H1 (cell line): ENCODE measurements at regions of chr7 and their contacts with region 1.

Region 1: GRCh38 chr7:36895192-36895591 is 170.9 kb upstream of the AOAH start:
- DNase-seq: no peak
- H3K4me3 ChIP-seq: no peak overlapping the region
- H3K27ac ChIP-seq: no peak overlapping the region
- H3K4me1 ChIP-seq: no peaks in the 10 kb centered on the region
- H3K27me3 ChIP-seq: no peaks in the 10 kb centered on the region
- CTCF ChIP-seq: no peak
- EP300 ChIP-seq: no peak
- POLR2A ChIP-seq: no peak
- RAD21 ChIP-seq: no peak

Region 2: GRCh38 chr7:36881233-36881874 is 13.8 kb before region 1 on chr7:
- CTCF ChIA-PET with region 1: interaction called, 14 read pairs
- POLR2A ChIA-PET with region 1: interaction called, 3 read pairs
- DNase-seq: no peak
- H3K4me3 ChIP-seq: no peak overlapping the region
- H3K27ac ChIP-seq: no peak overlapping the region
- H3K4me1 ChIP-seq: peaks cover 0 to 4% (median 1%) of the 10 kb centered on the region in 4 experiments; a peak in 2 of 7 replicates
- H3K27me3 ChIP-seq: no peaks in the 10 kb centered on the region
- CTCF ChIP-seq: no peak
- EP300 ChIP-seq: no peak
- POLR2A ChIP-seq: no peak
- RAD21 ChIP-seq: no peak

Region 3: DNA sequence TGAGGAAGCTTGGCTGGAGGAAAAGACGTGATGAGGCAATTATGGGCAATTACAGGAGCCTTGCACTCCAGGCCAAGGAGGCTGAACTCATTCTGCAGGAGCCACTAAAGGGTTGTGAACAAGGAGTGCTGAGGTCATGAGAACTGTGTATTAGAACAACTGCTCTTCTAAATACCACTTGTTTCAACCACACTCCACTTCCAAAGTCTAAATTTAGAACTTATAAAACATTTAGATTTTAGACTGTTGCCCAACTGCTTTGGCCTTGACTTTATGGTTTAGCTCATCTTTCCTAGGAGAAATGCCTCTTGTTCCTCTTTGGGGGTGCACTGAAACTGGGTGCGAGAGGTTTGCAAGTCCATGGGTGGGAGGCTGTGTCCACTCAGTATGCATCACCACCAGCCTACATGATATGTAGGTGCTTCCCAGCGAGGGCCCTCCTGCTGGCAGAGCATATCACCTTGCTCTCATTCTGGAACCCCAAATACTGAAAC is 28.8 kb after region 1 on chr7:
- CTCF ChIA-PET with region 1: no interaction called
- POLR2A ChIA-PET with region 1: no interaction called
- DNase-seq: no peak
- H3K4me3 ChIP-seq: no peak overlapping the region
- H3K27ac ChIP-seq: no peak overlapping the region
- H3K4me1 ChIP-seq: no peaks in the 10 kb centered on the region
- H3K27me3 ChIP-seq: no peaks in the 10 kb centered on the region
- CTCF ChIP-seq: no peak
- EP300 ChIP-seq: no peak
- POLR2A ChIP-seq: no peak
- RAD21 ChIP-seq: no peak